Calu3 (cell line): ENCODE measurements at regions of chr6 and their contacts with region 1.

Region 1: GRCh38 chr6:122471107-122472021 is at the start of gene SERINC1:
- DNase-seq: peak; percentile 88
- H3K4me3 Mint-ChIP-seq: peak within 1 kb of the TSS; percentile 94
- H3K27ac Mint-ChIP-seq: peak within 1 kb of the TSS; percentile 96
- H3K4me1 Mint-ChIP-seq: no peaks in the 10 kb centered on the region
- H3K27me3 Mint-ChIP-seq: no peaks in the 10 kb centered on the region
- CTCF ChIP-seq: no peak
- total RNA-seq, gene SERINC1: 117 and 125 TPM in 2 replicates

Region 2: DNA sequence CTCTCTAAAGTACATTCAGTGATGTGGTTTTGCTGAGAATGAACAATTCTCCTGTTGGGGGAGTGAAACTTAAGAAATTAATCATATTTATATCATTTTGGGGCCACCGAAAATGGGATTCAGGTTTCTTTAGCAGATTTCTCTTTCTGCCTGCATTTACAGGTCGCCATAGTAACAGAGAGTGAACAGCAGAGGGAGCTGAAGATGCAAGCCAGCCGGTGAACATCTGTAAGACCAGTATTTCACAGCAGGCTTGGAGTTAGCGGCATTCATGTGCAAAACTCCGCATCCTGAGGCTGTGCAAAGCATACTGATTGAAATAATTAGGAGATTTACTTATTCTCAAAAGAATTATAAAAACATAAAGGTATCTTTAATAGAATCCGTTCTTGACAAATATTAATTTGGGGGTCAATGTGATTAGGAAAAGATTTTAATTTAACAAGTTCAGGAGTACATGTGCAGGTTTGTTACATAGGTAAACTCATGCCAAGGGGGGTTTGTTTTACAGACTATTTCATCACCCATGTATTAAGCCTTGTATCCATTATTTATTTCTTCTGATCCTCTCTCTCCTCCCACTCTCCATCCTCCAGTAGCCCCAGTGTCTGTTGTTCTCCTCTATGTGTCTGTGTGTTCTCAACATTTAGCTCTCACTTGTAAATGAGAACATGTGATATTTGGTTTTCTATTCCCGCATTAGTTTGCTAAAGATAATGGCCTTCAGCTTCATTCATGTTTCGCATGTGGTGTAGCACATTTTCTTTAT is 89.7 kb before region 1 on chr6:
- CTCF ChIA-PET with region 1: no interaction called
- intact Hi-C with region 1: loop called (anchors 2 kb)
- DNase-seq: peak; percentile 55
- H3K4me3 Mint-ChIP-seq: no peak overlapping the region
- H3K27ac Mint-ChIP-seq: no peak overlapping the region
- H3K4me1 Mint-ChIP-seq: peaks cover 11% of the 10 kb centered on the region
- H3K27me3 Mint-ChIP-seq: peaks cover 18% of the 10 kb centered on the region
- CTCF ChIP-seq: peak; percentile 73

Region 3: DNA sequence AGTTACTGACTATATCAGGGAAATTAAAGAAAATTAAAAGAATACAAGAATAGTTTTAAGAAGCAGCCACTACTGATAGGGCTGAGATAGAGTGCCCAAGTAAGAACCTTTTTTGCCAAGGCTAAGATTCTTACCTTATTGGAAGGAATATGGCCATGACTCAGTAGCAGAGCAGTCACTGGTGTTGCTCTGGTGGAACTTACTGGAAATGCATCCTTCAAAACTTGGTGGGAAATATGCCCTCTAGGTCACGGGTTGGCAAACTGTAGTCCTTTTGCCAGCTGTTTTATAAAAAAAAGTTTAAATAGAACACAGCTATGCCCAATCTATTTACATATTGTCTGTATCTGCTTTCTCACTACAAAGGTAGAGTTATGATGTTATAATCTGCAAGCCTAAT is 65.9 kb before region 1 on chr6:
- CTCF ChIA-PET with region 1: no interaction called
- intact Hi-C with region 1: loop called (anchors 5 kb)
- DNase-seq: no peak
- H3K4me3 Mint-ChIP-seq: no peak overlapping the region
- H3K27ac Mint-ChIP-seq: no peak overlapping the region
- H3K4me1 Mint-ChIP-seq: peaks cover 55% of the 10 kb centered on the region
- H3K27me3 Mint-ChIP-seq: no peaks in the 10 kb centered on the region
- CTCF ChIP-seq: no peak

Region 4: DNA sequence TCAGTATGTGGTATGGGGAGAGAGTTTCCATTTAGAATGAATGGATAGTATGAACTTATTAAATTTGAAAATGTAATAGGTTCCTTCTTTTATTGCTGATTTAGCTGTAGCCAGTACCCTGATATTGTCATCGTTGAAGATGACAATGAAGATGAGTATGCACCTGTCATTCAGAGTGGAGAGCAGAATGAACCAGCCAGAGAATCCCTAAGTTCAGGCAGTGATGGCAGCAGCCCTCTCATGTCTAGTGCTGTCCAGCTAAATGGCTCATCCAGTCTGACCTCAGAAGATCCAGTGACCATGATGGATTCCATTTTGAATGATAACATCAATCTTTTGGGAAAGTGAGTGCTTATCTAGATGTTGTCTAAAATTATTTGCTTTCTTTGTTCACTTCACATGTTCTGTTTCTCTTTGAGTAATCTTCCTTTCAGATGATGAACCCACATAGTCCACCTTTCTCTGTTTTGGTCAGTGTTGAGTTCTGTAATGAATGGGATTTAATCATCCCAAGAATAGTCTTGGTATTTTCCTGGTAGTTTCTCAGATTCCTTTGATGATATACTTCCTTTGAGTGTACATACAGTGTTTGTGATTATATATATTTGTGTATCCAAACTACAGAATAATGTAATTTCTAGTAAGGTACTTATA is 48.6 kb before region 1 on chr6:
- CTCF ChIA-PET with region 1: no interaction called
- intact Hi-C with region 1: no loop called
- DNase-seq: no peak
- H3K4me3 Mint-ChIP-seq: no peak overlapping the region
- H3K27ac Mint-ChIP-seq: no peak overlapping the region
- H3K4me1 Mint-ChIP-seq: no peaks in the 10 kb centered on the region
- H3K27me3 Mint-ChIP-seq: no peaks in the 10 kb centered on the region
- CTCF ChIP-seq: no peak

Region 5: GRCh38 chr6:122530440-122531046 is 59.2 kb after region 1 on chr6:
- CTCF ChIA-PET with region 1: no interaction called
- intact Hi-C with region 1: loop called (anchors 1 kb)
- DNase-seq: peak; percentile 64
- H3K4me3 Mint-ChIP-seq: no peak overlapping the region
- H3K27ac Mint-ChIP-seq: no peak overlapping the region
- H3K4me1 Mint-ChIP-seq: no peaks in the 10 kb centered on the region
- H3K27me3 Mint-ChIP-seq: peaks cover 14% of the 10 kb centered on the region
- CTCF ChIP-seq: peak; percentile 69

Region 6: DNA sequence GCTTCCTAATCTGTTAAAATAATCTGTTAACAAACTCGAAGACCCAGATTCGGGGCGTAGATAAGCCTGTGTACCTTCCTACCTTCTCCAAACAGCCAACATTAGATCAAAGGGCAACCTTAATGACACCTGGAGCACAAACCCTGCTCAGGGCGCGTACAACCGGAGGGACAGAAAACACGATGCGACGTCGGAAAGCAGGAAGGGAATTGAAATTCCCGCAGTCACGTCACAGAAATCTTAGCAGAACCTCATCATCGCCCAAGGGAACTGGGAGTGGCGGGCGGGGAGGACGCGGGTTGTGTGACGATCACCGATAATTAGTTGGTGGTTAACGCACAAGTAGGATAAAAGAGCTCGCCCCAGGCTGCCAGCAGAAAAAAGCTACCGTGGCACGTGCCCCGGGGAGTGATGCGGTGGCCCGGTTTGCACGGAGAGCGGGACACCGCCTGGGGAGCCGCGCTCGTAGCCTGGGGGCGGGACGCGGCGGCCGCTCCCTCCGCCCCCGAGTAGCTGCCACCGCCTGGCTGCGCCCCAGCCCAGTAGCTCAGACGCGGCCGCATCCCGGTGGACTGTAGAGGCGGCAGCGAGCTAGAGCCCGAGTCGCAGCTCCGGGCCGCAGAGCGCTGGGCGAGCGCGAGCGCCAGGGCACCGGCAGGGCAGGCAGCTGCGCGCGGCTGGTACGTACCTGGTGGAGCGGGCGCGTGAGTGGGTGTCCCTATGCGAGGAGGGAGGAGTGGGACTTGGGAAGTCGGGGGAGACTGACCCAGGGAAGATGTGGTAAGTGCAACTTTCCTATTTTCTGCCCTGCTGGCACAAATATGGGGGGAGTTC is 138.7 kb after region 1 on chr6 and contains the start of gene PKIB:
- CTCF ChIA-PET with region 1: no interaction called
- intact Hi-C with region 1: loop called (anchors 10 kb)
- DNase-seq: peak; percentile 87
- H3K4me3 Mint-ChIP-seq: peak within 1 kb of the TSS; percentile 88
- H3K27ac Mint-ChIP-seq: peak within 1 kb of the TSS; percentile 39
- H3K4me1 Mint-ChIP-seq: no peaks in the 10 kb centered on the region
- H3K27me3 Mint-ChIP-seq: no peaks in the 10 kb centered on the region
- CTCF ChIP-seq: peak; percentile 21
- total RNA-seq, gene PKIB: 11.8 and 17.2 TPM in 2 replicates

Region 7: DNA sequence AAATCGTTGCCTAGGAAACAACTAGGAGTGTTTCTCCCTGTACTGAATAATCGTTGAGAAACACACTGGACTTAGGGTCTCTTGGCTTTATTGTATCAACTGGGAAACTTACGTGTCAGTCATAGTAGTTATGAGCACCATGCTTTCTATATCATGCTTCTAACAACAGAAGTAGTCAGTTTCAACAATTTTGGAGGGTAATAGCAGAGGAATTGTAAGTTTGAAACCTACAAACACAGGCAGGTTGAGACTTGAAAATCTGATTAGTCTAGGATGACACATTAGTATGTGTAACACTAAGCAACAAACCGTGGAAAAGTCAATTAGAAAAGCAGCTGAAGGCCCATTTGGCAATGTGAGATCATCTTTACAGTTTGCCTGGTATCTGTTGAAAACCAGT is 264.2 kb after region 1 on chr6:
- CTCF ChIA-PET with region 1: no interaction called
- intact Hi-C with region 1: no loop called
- DNase-seq: no peak
- H3K4me3 Mint-ChIP-seq: no peak overlapping the region
- H3K27ac Mint-ChIP-seq: no peak overlapping the region
- H3K4me1 Mint-ChIP-seq: no peaks in the 10 kb centered on the region
- H3K27me3 Mint-ChIP-seq: no peaks in the 10 kb centered on the region
- CTCF ChIP-seq: no peak